H1 (cell line): ENCODE measurements at regions of chr19 and their contacts with region 1.

Region 1: DNA sequence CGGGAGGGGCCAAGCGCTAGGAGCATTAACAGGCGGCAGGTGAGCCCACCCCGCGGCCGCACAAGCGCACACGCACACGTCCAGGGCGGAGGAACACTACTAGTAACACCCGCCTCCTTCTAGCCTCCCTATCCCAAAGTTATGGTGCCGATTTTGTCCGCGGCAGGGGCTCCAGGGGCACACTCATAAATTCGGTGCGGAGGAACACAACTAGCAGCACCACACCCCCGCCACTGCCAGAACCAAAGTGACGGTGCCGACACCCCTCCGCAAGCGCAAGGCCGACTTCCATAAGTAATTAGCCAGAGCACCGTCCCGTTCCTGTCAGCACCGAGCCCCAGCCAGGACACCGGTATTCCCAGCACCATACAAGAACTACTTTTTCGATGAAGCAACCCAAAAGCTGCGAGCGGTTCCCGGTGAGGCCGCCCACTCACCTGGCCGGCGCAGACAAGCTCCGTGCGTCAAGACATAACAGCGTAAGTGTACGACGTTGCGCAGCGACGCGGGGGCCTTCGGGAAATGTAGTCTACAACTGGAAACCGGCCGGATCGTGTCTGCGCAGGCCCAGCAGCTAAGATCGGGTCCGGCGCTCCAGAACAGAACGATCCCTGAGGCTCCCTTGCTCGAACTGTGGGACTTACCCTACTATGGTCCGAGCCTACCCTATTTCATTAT is at the starts of genes ZNF540 and ZNF571:
- DNase-seq: peak; percentile 89 to 90
- H3K4me3 ChIP-seq: peak within 1 kb of the TSS; percentile 64 to 82 (median 76)
- H3K27ac ChIP-seq: peak within 1 kb of the TSS; percentile 78
- H3K4me1 ChIP-seq: peaks cover 0 to 2% (median 0%) of the 10 kb centered on the region in 4 experiments; a peak in 4 of 7 replicates
- H3K27me3 ChIP-seq: peaks cover 0 to 4% (median 0%) of the 10 kb centered on the region in 4 experiments; a peak in 1 of 7 replicates
- CTCF ChIP-seq: no peak
- EP300 ChIP-seq: 0 out of 3 replicates have a peak, but pooled peaks of 1 of the 2 experiments have one; percentile 4
- POLR2A ChIP-seq: peak in 1 of 2 experiments; percentile 79; a peak in 2 of 3 replicates
- RAD21 ChIP-seq: peak in 1 of 2 experiments; percentile 1; a peak in 1 of 4 replicates
- total RNA-seq, gene ZNF540: 0.17 and 0.21 TPM in 2 replicates
- total RNA-seq, gene ZNF571: 3.9 and 6.4 TPM in 2 replicates

Region 2: DNA sequence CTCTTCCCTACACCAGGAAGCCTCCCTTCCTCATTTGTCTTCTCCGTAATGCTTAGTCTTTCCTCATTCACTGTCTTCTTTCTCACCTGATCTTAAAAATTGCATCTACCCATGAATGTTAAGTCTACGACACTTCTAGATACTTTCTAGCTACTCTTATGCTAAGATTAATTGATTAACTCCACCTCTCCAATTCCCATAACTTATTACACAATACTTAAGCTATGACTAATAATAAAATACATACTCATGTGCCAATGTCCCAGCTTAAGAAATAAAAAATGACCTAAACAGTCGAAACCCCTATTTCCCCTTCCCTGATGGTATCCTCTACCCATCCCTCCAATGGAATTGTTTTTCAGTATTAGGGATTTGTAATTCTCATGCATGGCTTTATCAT is 246.4 kb before region 1 on chr19:
- CTCF ChIA-PET with region 1: no interaction called
- POLR2A ChIA-PET with region 1: no interaction called
- DNase-seq: no peak
- H3K4me3 ChIP-seq: no peak overlapping the region
- H3K27ac ChIP-seq: no peak overlapping the region
- H3K4me1 ChIP-seq: no peaks in the 10 kb centered on the region
- H3K27me3 ChIP-seq: no peaks in the 10 kb centered on the region
- CTCF ChIP-seq: no peak
- EP300 ChIP-seq: no peak
- POLR2A ChIP-seq: no peak
- RAD21 ChIP-seq: no peak

Region 3: DNA sequence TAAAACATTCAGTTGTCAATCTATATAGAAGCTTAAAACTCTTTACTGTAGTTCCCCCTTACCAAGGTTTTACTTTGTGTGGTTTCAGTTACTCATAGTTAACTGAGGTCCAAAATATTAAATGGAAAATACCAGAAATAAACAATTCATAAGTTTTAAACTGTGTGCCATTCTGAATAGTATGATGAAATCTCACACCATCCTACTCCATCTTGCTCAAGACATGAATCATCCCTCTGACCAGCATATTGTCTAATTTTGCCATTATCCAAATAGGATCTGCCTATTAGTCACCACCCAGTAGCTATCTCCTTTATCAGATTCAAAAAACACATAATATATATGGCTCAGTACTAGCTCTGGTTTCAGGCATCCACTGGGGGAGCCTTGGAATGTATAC is 22.2 kb before region 1 on chr19:
- CTCF ChIA-PET with region 1: no interaction called
- POLR2A ChIA-PET with region 1: no interaction called
- DNase-seq: no peak
- H3K4me3 ChIP-seq: no peak overlapping the region
- H3K27ac ChIP-seq: no peak overlapping the region
- H3K4me1 ChIP-seq: no peaks in the 10 kb centered on the region
- H3K27me3 ChIP-seq: no peaks in the 10 kb centered on the region
- CTCF ChIP-seq: no peak
- EP300 ChIP-seq: no peak
- POLR2A ChIP-seq: no peak
- RAD21 ChIP-seq: no peak

Region 4: GRCh38 chr19:37583340-37583739 is 11.1 kb before region 1 on chr19:
- CTCF ChIA-PET with region 1: interaction called, 14 read pairs
- POLR2A ChIA-PET with region 1: interaction called, 9 read pairs
- DNase-seq: no peak
- H3K4me3 ChIP-seq: no peak overlapping the region
- H3K27ac ChIP-seq: no peak overlapping the region
- H3K4me1 ChIP-seq: no peaks in the 10 kb centered on the region; a peak in 1 of 7 replicates
- H3K27me3 ChIP-seq: no peaks in the 10 kb centered on the region
- CTCF ChIP-seq: peak in 2 of 3 experiments; percentile 34 to 59; a peak in 2 of 4 replicates
- EP300 ChIP-seq: no peak
- POLR2A ChIP-seq: no peak
- RAD21 ChIP-seq: peak; percentile 22 to 43; a peak in 3 of 4 replicates

Region 5: GRCh38 chr19:37695144-37695899 is 100.9 kb after region 1 on chr19:
- CTCF ChIA-PET with region 1: no interaction called
- POLR2A ChIA-PET with region 1: interaction called, 11 read pairs
- DNase-seq: no peak
- H3K4me3 ChIP-seq: no peak overlapping the region
- H3K27ac ChIP-seq: no peak overlapping the region
- H3K4me1 ChIP-seq: peaks cover 0 to 2% (median 0%) of the 10 kb centered on the region in 4 experiments; a peak in 1 of 7 replicates
- H3K27me3 ChIP-seq: peaks cover 1 to 17% (median 9%) of the 10 kb centered on the region in 4 experiments; a peak in 5 of 7 replicates
- CTCF ChIP-seq: no peak
- EP300 ChIP-seq: no peak
- POLR2A ChIP-seq: no peak
- RAD21 ChIP-seq: 0 out of 4 replicates have a peak, but pooled peaks of 1 of the 2 experiments have one; percentile 0